ENCODE measurements at regions of chr16 and their contacts with region 1.

Region 1: DNA sequence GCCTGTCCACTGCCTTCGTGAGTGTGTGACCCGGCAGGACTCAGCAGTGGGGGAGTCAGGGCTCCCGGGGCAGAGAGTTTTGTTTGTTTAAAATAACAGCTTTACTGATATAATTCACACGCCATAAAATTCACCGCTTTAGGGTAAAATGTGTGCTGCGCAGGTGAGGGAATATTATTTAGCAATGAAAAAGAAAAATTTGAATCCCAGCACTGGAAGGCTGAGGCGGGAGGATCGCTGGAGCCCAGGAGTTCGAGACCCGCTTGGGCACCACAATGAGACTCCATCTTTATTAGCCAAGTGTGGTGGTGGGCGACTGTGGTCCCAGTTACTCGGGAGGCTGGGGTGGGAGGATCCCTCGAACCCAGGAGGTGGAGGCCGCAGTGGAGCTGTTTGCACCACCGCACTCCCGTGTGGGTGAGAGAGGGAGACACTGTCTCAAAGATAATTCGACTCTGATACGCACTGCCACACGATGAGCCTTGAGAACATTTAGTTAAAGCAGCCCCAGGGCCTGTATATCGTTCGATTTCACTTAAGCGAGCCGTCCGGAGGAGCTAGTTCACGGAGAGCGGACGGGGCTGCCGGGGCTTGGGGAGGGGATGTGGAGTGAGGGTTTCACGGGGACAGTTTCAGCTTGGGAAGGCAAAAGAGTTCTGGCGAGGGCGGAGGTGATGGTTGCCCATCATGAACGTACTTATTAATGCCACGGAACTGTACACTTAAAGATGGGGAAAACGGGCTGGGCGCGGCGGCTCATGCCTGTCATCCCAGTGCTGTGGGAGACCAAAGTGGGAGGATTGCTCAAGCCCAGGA is 10.2 kb downstream of the TELO2 start:
- DNase-seq: no peak
- ATAC-seq: no peak
- H3K4me3 Mint-ChIP-seq: no peak overlapping the region
- H3K27ac Mint-ChIP-seq: no peak overlapping the region
- H3K4me1 Mint-ChIP-seq: no peaks in the 10 kb centered on the region
- H3K27me3 Mint-ChIP-seq: no peaks in the 10 kb centered on the region
- CTCF ChIP-seq: no peak

Region 2: DNA sequence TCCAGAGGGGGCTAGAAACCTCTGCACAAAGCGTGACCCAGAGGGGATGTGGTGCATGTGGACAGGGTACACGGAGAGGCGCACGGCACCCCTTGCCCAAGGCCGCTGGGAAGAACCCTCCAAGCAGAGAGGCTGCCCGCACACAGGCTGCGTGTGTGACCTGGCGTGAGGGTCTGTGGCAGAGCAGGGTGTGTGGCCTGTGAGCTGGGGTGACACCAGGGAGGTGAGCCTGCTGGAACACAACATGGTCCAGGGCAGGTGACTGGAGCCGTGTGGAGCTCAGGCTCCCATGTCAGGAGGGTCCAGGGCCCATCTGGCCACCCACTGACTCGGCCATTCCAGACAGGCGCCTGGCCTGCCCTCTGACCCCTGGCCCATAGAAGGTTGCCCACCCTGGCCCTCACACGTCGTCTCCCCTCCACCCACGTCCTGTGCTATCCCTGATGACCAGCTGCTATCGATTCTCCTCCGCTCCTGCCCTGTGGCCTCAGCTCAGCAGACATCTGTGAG is 15.4 kb after region 1 on chr16:
- CTCF ChIA-PET with region 1: no interaction called
- POLR2A ChIA-PET with region 1: interaction called, 12 read pairs
- intact Hi-C with region 1: no loop called
- DNase-seq: no peak
- ATAC-seq: no peak
- H3K4me3 Mint-ChIP-seq: no peak overlapping the region
- H3K27ac Mint-ChIP-seq: no peak overlapping the region
- H3K4me1 Mint-ChIP-seq: no peaks in the 10 kb centered on the region
- H3K27me3 Mint-ChIP-seq: no peaks in the 10 kb centered on the region
- CTCF ChIP-seq: no peak

Measured in activated B cell treated with CpG ODN at 0.5 μM for 24 hours (primary cell).